ENCODE measurements at regions of chr4 and their contacts with region 1.

Region 1: DNA sequence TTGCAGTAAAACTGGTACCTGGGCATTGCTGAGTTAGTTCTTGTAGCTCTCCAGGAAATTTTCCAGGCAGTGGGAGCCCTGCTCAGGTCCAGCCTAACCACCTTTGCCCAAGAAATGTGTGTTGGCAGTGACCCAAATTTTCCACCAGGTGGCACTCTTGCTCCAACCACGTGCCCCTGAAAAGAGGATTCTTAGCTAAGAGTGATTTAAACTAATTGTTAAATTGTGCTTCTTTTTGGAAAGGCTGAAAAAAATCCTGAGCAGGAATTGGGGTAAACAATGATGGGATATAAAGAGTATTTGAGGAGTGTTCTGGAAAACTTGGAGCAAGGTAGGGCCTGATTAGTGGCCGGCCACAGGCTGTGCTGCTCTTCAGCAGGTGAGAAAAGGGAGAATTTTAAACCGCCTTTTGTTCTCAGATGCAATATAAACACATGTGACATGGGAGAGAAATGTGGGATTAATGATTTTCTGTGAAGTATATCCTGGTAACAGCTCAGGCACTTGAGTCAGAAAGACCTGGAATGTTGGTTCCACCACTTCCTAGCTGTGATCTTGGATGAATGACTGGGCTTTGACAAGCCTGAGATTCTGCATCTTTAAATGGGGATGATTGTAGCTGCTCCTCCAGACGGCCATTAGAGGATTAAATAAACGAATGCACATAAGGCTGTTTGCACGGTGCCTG is 219.6 kb downstream of the PTTG2 start:
- DNase-seq: peak; percentile 67
- ATAC-seq: peak; percentile 69

Region 2: DNA sequence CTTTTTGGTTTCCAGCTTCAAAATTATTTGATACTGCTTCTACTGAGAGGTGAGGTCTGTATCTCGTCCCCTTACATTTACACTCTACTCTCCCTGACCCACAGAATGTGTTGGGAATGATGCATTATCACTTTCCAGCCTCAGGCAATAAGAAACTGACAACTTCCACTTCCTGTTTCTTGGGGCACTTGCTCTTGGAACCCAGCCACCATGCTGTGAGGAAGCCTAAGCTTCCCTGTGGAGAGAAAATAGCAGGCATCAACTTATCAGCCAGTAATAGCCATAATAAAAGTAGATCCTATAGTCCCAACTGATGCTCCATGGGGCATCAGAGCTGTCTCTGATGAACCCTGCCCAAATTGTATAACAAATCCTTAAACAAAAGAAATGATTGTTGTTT is 526.2 kb before region 1 on chr4:
- intact Hi-C with region 1: no loop called
- DNase-seq: no peak
- ATAC-seq: no peak

Region 3: DNA sequence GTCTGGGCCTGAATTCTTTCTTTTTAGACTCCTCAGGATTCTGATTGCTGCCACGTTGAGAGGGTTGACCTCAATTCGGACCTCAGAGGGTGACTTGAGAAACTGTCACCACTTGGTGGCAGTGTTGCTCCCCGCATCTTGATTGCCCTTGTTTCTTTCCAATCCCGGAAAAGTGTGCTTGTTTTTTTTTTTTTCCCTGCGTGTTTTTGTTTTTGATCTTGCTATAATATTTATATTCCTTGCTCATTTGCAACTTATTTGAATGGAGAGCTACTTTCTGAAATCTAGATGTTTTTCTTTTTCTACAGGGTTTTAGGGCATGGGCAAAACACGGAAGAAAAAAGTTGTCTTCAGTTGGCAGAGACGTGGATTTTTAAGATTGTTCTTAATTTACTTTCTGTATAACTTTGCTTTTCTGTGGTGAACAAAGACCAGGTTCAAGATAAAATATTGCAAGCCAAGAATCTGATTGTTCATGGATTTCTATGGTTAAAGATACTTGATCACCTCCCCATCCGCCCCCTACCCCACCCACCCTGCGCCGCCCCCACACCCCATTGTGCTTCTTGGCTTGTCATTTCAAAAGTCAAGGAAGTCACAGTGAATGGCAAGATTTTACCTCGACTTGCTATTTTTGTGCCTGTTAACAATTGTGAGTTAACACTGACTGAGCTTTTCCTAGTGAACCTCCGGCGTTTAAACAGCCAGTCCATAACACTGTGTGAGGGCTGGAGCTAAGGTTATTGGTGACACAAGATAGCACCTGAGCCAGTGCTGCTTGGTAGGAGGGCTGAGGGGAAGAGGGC is 117.5 kb before region 1 on chr4:
- intact Hi-C with region 1: loop called (anchors 5 kb)
- DNase-seq: peak; percentile 85
- ATAC-seq: peak; percentile 89

Region 4: GRCh38 chr4:38319456-38320342 is 139.9 kb after region 1 on chr4:
- intact Hi-C with region 1: loop called (anchors 5 kb)
- DNase-seq: peak; percentile 97
- ATAC-seq: peak; percentile 88

Region 5: GRCh38 chr4:38675146-38676121 is 495.6 kb after region 1 on chr4:
- intact Hi-C with region 1: loop called (anchors 2 kb)
- DNase-seq: peak; percentile 62
- ATAC-seq: peak; percentile 68

Region 6: DNA sequence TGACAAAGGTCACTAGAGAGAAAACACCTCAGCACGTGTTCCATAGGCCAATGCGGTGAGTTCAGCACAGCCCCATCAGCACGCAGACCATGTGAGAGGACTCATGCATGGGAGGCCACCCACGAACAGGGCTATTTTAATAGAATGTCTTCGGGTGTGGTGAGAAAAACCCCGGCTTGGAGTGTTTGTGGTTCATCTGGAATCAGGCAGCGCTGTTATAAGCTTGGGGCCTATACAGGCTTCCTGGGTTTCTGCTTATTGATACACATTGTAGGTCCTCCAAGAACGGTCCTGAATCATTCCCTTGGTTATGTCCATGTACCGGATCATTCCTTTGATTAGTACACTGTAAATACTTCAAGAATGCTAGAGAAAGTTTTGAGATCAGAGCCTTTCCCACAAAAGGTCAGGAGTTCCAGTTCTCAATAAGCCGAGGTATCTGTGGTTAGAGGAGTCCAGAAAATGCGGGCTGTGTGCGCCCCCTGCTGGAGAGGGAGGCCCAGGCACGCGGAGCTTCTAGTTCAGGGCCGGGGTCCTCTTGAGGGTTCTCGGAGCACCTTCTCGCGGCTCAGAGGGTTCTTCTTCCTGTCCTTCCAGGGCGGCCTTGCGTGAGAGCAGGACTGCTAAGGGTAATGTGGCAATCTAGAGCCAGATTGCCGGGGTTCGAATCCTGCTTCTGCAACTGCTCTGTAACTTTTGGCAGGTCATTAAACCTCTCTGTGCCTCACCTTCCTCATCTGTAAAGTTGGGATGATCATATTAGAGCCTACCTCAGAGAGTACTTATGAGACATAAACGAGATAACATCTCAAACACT is 551.2 kb after region 1 on chr4:
- intact Hi-C with region 1: loop called (anchors 2 kb)
- DNase-seq: peak; percentile 91
- ATAC-seq: peak; percentile 93

Measured in Right ventricle myocardium superior (tissue), 1 donor.